Right ventricle myocardium inferior (tissue), 1 donor: ENCODE measurements at regions of chr10 and their contacts with region 1.

Region 1: GRCh38 chr10:124641282-124642087 is 102.7 kb downstream of the FAM53B start:
- DNase-seq: peak; percentile 77
- ATAC-seq: peak; percentile 73

Region 2: DNA sequence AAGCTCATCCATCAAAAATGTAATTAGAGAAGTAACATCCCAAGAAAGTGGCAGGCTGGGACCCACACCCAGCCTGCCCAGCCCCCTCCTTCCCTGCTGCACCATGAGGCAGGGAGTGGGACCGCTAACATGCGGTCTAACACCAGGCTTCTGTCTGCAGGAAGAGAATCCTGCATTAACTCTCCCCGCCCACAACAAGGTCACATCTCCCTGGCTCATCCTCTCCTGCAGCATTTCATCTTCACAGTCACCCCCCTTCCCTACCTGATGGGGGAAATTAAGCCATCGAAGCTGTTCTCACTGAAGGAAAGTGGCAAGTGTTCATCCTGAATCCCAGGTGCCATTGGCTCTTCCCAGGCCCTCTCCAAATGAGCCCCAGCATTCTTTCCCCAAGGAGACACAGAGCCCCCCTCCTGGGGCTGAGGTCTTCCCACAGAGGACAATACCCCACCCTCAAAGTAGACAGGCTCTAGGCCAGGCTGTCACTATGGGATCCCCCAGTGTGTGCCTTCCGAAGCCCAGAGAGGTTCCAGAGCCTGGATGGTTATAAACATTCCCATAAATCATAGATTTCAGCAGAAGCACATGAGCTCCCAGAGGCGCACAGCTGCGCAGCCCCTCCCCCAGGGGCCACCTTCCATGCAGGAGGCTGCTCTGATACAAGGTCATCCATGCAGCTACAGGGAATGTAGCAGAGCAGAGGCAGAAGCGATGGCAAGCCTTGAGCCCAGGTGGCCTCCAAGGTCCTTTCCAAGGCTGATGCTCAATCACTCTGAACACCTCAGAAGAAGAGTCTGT is 370.8 kb before region 1 on chr10:
- intact Hi-C with region 1: no loop called
- DNase-seq: no peak
- ATAC-seq: no peak

Region 3: GRCh38 chr10:124560377-124561105 is 80.9 kb before region 1 on chr10:
- intact Hi-C with region 1: no loop called
- DNase-seq: peak; percentile 70
- ATAC-seq: peak; percentile 87

Region 4: GRCh38 chr10:124677749-124678556 is 36.5 kb after region 1 on chr10:
- intact Hi-C with region 1: loop called (anchors 5 kb)
- DNase-seq: no peak
- ATAC-seq: peak; percentile 79

Region 5: DNA sequence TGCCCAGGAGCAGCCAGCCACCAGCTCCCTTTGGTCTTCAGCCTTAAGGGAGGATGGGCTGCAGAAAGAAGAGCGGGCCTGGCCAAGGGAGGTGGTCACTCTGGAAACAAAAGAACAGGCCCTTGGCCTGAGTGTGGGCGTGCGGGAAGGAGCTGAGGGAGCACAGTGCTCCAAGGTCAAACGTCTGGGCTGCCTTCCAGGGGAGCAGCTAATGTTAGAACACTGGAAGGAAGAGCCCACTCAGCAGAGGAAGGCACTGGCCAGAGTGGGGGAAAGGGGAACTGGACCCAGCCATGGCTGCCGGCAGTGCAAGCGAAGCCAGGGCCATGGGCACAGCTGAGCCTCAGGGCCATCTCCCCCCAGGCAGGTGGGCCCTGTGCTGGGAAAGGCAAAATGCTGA is 60.0 kb after region 1 on chr10:
- intact Hi-C with region 1: loop called (anchors 2 kb)
- DNase-seq: peak; percentile 95
- ATAC-seq: peak; percentile 86